Ovary (tissue), 10 donors: ENCODE measurements at regions of chr15 and their contacts with region 1.

Region 1: DNA sequence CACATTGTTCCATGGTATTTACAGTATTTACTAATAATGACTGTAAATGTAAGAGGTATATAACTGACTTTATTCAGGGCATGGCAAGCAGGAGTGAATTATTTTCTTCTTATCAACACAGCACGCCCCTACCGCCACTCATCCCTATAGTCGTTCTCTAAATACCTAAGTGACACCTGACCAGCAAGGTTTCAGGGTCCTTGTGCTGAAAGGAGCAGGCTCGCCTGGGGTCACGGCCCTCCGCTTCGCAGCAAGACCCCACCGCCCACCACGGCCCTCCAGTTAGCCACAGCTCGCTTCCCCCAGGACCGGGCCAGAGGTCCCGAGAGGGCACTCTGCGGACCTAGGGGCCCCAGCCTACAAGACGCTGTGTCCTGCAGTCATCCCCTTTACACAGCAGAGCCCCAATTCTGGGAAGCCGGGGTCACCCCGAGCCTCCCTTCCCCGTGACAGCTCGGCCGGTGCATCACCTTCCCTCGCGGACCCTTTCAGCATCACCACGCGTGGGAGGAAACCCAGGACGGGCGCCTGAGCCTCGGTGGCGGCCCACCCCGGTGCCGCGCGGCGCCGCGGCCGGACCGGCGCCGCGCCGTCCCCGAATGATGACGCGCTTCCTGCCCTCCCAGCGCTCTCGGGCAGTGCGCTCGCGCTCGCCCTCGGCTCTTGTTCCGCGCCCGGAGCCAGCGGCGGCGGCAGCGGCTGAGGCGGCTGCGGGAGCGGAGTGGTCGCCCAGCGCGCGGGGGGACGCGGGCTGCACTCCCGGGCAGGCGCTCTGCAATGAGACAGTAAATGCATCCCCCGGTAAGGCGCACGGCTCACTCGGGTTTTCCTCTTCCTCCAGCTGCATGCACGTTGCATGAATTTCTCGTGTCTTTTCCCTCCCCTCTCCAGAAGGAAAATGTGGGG is 225.1 kb upstream of the C2CD4B start:
- DNase-seq: peak; percentile 62 to 83 (median 73)
- H3K4me3 ChIP-seq: peak within 1 kb of the TSS; percentile 66
- H3K27ac ChIP-seq: peak within 1 kb of the TSS; percentile 42 to 82
- H3K4me1 ChIP-seq: peaks cover 3% of the 10 kb centered on the region
- H3K27me3 ChIP-seq: no peaks in the 10 kb centered on the region
- CTCF ChIP-seq: peak in 1 of 3 donors; percentile 5
- EP300 ChIP-seq: no peak
- POLR2A ChIP-seq: peak; percentile 50

Region 2: GRCh38 chr15:62549345-62549970 is 159.3 kb after region 1 on chr15:
- intact Hi-C with region 1: loop called in 1 of 4 experiments (anchors 10 kb)
- DNase-seq: no peak
- H3K4me3 ChIP-seq: no peak overlapping the region
- H3K27ac ChIP-seq: no peak overlapping the region
- H3K4me1 ChIP-seq: peaks cover 10% of the 10 kb centered on the region
- H3K27me3 ChIP-seq: no peaks in the 10 kb centered on the region
- CTCF ChIP-seq: no peak
- EP300 ChIP-seq: no peak
- POLR2A ChIP-seq: no peak

Region 3: GRCh38 chr15:62649793-62650420 is 259.8 kb after region 1 on chr15:
- intact Hi-C with region 1: loop called in 2 of 4 experiments (anchors 5 kb)
- DNase-seq: no peak
- H3K4me3 ChIP-seq: no peak overlapping the region
- H3K27ac ChIP-seq: no peak overlapping the region
- H3K4me1 ChIP-seq: peaks cover 4% of the 10 kb centered on the region
- H3K27me3 ChIP-seq: no peaks in the 10 kb centered on the region
- CTCF ChIP-seq: no peak
- EP300 ChIP-seq: no peak
- POLR2A ChIP-seq: no peak

Region 4: DNA sequence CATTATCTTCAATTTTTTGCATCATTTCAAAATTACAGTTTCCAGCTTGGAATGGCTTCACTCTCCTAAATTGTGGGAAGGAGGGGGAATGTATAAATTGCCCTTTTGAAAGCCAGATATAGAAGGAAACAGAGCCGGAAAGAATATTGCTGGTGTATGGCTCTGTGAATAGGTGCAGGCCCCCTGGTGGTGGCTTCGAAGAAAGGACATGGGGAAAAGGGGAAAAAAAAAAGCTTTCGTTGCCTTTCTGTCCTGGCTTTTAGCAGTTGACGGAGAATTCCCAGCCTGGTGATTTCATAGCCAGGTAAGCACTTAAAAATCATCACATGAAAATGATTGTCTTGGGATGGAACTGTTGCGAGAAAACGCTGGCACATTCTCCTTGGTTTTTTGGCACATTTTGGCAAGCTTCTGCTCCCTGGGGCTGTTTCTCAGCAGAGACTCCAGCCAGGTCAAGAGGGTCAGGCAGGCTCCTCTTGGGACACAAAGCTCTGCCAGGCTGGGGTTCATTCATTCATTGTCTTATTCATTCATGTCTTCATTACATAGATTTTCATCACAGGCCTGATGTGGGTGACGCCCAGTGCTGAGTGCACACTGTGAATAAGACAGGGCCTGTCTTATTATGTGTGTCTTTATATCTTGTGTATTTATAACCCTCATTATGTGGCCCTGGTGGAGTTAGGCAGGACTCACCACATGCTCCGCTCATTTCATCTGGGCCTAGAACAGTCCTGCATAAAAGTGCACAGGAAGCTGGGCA is 352.5 kb after region 1 on chr15:
- intact Hi-C with region 1: loop called in 1 of 4 experiments (anchors 10 kb)
- DNase-seq: peak; percentile 55 to 73 (median 66)
- H3K4me3 ChIP-seq: no peak overlapping the region
- H3K27ac ChIP-seq: peak overlapping the region; percentile 1 to 22
- H3K4me1 ChIP-seq: peaks cover 2% of the 10 kb centered on the region
- H3K27me3 ChIP-seq: no peaks in the 10 kb centered on the region
- CTCF ChIP-seq: peak; percentile 55 to 77 (median 65)
- EP300 ChIP-seq: no peak
- POLR2A ChIP-seq: no peak